Keratinocyte (primary cell): ENCODE measurements at regions of chr4 and their contacts with region 1.

Region 1: DNA sequence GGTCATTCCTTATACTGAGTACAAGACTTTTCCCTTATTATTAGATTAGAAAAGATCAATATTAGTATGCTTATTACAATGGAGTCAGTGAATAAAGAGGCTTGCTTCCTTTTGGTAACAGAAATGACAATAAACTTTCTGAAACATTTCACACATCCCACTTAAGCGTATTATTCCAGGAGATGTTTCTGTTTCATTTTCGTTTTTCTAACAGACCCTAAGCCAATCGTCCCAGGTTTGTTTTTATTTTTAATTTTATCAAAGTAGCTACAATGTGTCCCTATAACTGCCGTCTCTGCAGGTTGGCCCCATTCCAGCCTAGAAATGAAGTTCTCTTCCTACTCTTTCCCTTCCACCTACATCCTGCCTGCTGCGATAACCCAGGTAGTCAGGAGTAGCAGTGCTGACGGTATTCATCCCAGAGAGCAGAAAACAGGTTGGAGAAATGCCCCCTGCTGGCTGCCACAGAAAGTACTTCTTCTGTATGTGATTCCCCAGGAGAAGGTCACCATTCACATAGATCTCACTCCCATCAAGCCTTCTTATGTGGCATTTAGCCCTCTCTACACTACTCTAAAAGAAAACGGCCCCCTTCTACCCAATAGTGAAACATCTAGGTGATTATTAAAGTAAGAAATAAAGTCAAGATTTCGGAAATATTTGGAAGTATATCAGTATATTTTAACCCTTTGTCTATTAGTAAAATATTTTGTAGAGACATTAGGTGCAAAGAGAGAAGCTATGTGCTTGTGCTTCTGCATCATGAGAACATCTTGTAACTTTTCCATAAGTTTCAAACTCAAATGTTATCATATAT is 40.4 kb downstream of the ENPEP start:
- DNase-seq: peak; percentile 41
- H3K4me3 ChIP-seq: peak overlapping the region; percentile 27 to 83 (median 75)
- H3K27ac ChIP-seq: no peak overlapping the region
- H3K4me1 ChIP-seq: peaks cover 5% of the 10 kb centered on the region
- H3K27me3 ChIP-seq: no peaks in the 10 kb centered on the region
- CTCF ChIP-seq: peak; percentile 78 to 92 (median 86)

Region 2: GRCh38 chr4:110049951-110050925 is 466.1 kb before region 1 on chr4:
- dilution Hi-C with region 1: loop called (anchors 25 kb)
- DNase-seq: no peak
- H3K4me3 ChIP-seq: no peak overlapping the region
- H3K27ac ChIP-seq: no peak overlapping the region
- H3K4me1 ChIP-seq: no peaks in the 10 kb centered on the region
- H3K27me3 ChIP-seq: no peaks in the 10 kb centered on the region
- CTCF ChIP-seq: peak; percentile 68 to 73 (median 73)